Head of caudate nucleus (tissue), 42 donors: ENCODE measurements at regions of chr16 and their contacts with region 1.

Region 1: DNA sequence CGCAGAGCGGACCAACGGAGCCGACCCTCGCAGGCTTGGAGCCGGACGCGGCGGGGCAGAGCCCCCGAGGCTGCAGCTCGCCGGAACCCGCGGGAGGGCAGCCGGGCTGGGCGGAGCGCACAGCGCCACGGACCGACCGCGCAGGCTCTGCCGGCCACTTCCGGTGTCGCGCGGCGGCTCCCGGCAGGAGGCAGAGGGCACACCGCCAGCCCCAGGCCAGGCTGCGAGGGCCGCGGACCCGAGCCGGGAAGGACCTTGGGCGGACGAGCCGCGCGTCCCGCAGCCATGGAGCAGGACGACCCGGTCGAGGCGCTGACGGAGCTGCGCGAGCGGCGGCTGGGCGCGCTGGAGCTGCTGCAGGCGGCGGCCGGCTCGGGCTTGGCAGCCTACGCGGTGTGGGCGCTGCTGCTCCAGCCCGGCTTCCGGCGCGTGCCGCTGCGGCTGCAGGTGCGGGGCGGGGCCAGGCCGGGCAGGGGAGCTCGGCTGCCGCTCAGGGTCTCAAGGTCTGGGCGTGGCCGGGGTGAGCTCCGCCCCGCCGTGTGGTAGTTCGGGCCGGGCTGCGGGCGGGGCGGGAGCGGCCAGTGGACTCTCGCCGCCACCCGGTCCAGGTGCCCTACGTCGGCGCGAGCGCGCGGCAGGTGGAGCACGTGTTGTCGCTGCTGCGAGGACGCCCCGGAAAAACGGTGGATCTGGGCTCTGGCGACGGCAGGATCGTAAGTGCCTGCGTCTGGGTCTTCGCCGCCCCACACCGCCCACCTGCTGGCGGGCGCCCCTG is at the start of gene ANTKMT:
- DNase-seq: peak in 37 of 42 donors; percentile 57 to 90 (median 79)

Region 2: DNA sequence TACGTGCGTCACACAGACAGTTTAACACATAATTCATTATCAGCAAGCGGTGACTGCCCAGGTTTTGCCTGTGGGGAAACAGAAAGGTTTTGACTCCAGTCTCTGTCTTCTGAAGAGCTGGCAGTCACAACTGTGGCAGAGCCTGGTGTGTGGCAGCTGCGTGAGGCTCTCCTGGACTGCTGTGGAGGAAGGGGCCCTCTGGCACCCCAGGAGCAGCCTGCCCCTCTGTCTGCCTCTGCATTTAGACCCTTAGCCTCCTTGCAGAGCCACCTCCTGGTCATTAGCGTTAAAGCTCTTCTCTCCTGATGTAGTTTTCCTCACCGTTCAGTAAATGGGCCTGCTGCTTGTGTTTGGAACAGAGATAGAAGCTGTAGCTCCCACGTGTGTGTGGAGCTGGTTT is 120.4 kb before region 1 on chr16:
- intact Hi-C with region 1: no loop called
- DNase-seq: peak in 1 of 42 donors; percentile 58

Region 3: DNA sequence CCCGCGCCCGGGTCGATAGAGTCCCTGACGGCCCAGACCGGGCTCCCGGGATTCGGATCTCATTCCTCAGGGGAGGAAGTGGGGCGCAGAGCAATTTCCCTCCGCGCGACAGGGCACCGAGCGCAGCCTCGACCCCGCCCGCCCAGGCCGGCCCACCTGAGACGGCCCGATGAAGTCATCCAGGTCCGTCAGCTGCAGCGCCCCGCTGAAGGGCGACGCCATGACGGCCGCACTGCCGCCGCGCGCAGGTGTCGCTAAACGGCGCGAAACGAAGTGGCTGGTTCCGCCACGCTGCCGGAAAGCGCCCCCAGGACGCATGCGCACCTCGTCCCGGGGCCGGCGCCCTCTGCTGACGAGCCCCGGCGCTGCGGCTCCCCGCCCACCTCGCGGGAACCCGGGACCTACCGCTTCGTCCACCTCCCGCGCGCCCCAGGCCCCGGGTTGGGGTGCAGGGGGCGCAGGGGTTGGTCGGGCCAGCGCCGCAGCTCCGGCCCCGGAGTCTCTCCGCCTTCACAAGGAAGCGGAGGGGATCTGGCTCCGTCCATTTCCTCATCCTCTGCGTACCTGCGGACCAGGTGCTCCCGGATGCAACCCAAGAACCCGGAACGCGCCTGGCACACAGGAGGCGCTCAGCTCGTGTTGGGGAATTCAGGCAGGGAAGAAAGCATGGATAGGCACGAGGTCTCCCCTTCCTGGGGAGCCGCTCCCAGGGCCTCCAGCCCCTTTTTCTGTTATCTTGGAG is 19.8 kb after region 1 on chr16 and contains the start of gene CIAO3:
- intact Hi-C with region 1: loop called (anchors 2 kb)
- DNase-seq: peak; percentile 65 to 95 (median 88)

Region 4: GRCh38 chr16:777826-778225 is 56.6 kb after region 1 on chr16:
- intact Hi-C with region 1: no loop called
- DNase-seq: no peak